Activated T-helper 2 cell treated with anti-CD3 and anti-CD28 coated beads, Interferon-gamma antibody, Interleukin-2, Interleukin-4, amounts not matched to agents 10 μg/mL and 5 μg/mL and 100 μg/mL, durations not matched to agents 14 hours and 24 hours and 36 hours (primary cell): ENCODE measurements at regions of chr17 and their contacts with region 1.

Region 1: DNA sequence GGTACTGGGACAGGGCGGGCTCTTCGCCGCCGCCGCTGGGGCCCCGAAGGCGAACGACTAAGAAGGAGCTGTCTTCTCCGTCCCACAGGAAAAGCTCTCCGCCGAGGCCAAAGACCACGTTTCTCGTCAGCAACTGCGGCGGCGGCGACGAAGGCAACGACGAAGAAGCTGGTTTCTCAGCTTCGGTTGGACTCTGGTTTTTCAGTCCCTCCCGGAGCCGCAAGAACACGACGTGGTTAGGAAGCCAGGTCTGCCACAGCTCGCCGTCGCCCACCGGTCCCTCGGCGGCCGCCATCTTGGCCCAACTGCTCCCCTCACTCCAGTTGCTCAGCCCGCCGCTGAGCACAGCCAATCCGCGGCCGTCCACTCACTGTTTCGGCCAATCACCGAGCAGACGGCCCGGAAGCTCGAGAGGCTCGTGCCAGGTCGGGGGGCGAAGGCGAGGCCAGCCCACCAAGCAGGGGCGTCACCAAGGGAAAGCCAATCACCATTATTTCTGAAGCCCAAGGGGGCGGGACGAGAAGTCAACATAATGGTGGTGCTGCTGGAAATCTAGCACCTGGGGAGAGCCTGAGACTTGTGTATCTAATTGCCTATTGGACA is at the start of gene NUP88:
- DNase-seq: peak; percentile 96
- H3K4me3 Mint-ChIP-seq: peak within 1 kb of the TSS; percentile 99
- H3K27ac Mint-ChIP-seq: peak within 1 kb of the TSS; percentile 98
- H3K4me1 Mint-ChIP-seq: peaks cover 28% of the 10 kb centered on the region
- H3K27me3 Mint-ChIP-seq: no peaks in the 10 kb centered on the region
- total RNA-seq, gene NUP88: 139 and 152 TPM in 2 replicates

Region 2: DNA sequence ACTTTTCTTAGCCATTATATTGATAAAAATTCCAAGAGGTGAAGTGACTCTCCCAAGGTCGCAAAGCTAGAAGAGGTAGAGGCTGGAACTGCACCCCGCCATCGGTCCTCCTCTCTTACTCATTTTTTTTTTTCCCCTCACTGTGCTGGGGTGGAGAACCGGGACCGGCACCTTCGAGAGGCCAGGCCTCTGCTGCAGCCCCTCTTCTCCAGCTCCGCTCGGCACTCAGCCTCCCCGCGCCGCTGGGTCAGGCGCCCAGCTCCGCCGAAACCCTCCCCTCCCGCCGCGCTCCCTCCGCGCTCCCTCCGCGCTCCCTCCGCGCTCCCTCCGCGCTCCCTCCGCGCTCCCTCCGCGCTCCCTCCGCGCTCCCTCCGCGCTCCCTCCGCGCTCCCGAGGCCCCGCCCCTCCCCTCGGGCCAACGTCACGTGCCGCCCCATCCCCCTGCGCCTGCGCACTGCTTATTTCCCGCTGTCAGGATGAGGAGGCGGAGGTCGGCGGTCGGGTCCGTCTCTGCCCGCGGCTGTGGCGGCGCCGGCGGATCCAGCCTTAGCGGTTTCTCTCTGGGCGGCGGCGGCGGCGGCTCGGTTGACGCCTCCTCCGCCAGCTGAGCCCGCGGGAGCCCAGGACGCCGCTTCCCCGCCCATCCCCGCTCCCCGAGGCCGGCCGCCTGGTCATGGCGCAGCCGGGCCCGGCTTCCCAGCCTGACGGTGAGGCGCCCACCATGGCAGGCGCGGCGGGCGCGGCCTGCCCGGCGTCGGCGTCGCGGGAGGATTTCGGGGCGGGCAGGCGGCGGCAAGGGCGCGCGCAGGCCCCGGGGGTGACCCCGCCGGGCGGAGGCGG is 137.4 kb before region 1 on chr17 and contains the start of gene RABEP1:
- intact Hi-C with region 1: loop called (anchors 10 kb)
- DNase-seq: peak; percentile 92
- H3K4me3 Mint-ChIP-seq: peak within 1 kb of the TSS; percentile 87
- H3K27ac Mint-ChIP-seq: peak within 1 kb of the TSS; percentile 84
- H3K4me1 Mint-ChIP-seq: peaks cover 24% of the 10 kb centered on the region
- H3K27me3 Mint-ChIP-seq: no peaks in the 10 kb centered on the region
- total RNA-seq, gene RABEP1: 45.8 and 53.2 TPM in 2 replicates

Region 3: GRCh38 chr17:5438716-5439445 is 19.4 kb after region 1 on chr17 and contains the start of gene C1QBP:
- intact Hi-C with region 1: loop called (anchors 1 kb)
- DNase-seq: peak; percentile 90
- H3K4me3 Mint-ChIP-seq: peak within 1 kb of the TSS; percentile 90
- H3K27ac Mint-ChIP-seq: peak within 1 kb of the TSS; percentile 82
- H3K4me1 Mint-ChIP-seq: peaks cover 36% of the 10 kb centered on the region
- H3K27me3 Mint-ChIP-seq: no peaks in the 10 kb centered on the region
- total RNA-seq, gene C1QBP: 363 and 372 TPM in 2 replicates

Region 4: GRCh38 chr17:5468075-5468473 is 48.6 kb after region 1 on chr17:
- intact Hi-C with region 1: loop called (anchors 1 kb)
- DNase-seq: no peak
- H3K4me3 Mint-ChIP-seq: peak overlapping the region; percentile 95
- H3K27ac Mint-ChIP-seq: peak overlapping the region; percentile 44
- H3K4me1 Mint-ChIP-seq: peaks cover 39% of the 10 kb centered on the region
- H3K27me3 Mint-ChIP-seq: no peaks in the 10 kb centered on the region